ENCODE measurements at regions of chr10 and their contacts with region 1.

Region 1: GRCh38 chr10:51960494-51960895 is 261.1 kb upstream of the CSTF2T start:
- DNase-seq: no peak
- ATAC-seq: no peak
- H3K4me3 Mint-ChIP-seq: no peak overlapping the region
- H3K27ac Mint-ChIP-seq: no peak overlapping the region
- H3K4me1 Mint-ChIP-seq: no peaks in the 10 kb centered on the region
- H3K27me3 Mint-ChIP-seq: peaks cover 17% of the 10 kb centered on the region

Region 2: GRCh38 chr10:51010977-51011376 is 949.5 kb before region 1 on chr10:
- CTCF ChIA-PET with region 1: interaction called, 4 read pairs
- POLR2A ChIA-PET with region 1: no interaction called
- intact Hi-C with region 1: loop called (anchors 2 to 10 kb)
- DNase-seq: peak; percentile 21
- ATAC-seq: peak; percentile 42
- H3K4me3 Mint-ChIP-seq: no peak overlapping the region
- H3K27ac Mint-ChIP-seq: no peak overlapping the region
- H3K4me1 Mint-ChIP-seq: no peaks in the 10 kb centered on the region
- H3K27me3 Mint-ChIP-seq: peaks cover 15% of the 10 kb centered on the region

Region 3: GRCh38 chr10:51063659-51064535 is 896.6 kb before region 1 on chr10:
- CTCF ChIA-PET with region 1: no interaction called
- POLR2A ChIA-PET with region 1: no interaction called
- intact Hi-C with region 1: loop called in 1 of 2 experiments (anchors 5 kb)
- DNase-seq: no peak
- ATAC-seq: no peak
- H3K4me3 Mint-ChIP-seq: no peak overlapping the region
- H3K27ac Mint-ChIP-seq: no peak overlapping the region
- H3K4me1 Mint-ChIP-seq: no peaks in the 10 kb centered on the region
- H3K27me3 Mint-ChIP-seq: peaks cover 7% of the 10 kb centered on the region

Region 4: DNA sequence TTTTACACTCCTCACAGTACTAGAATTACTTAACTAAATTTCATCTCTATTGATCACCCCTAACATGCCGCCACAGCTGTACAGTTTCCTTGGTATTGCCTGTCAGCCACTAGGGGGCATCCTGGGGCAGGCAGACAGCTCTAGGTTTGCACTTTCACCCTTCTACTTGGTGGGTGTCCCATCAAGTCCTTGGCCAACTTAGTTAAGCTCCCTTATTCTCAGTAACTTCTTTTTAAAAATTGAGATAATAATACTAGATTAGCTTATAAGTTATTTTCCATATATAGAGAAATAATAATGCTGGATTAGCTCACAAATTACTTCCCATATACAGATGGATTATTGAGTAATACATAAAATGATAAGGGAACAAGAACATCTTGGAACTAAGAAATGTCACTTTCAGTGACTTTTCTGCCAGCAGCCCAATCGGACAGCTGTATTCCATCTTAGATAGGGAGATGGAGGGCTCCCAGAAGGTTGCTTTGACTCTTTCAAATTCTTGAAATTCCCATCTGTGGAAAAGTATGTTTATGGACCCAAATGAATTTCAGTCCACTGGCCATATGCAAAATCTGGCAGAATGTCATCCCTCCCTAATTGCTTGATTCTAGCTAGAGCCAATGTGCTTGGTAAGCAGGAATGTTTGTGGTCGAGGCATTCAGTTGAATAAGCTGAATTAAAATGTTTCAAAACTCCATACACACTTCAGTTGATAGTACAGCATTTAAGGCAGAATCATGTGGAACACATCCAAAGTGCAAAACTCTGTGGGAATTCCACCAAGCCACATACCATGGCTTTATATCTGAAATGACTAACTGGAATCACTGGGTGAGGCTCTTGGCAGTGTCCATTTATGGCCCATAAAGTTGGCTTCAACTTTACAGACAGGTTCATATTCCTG is 570.8 kb before region 1 on chr10:
- CTCF ChIA-PET with region 1: interaction called, 24 read pairs
- POLR2A ChIA-PET with region 1: no interaction called
- intact Hi-C with region 1: loop called (anchors 1 to 2 kb)
- DNase-seq: peak; percentile 73
- ATAC-seq: peak; percentile 74
- H3K4me3 Mint-ChIP-seq: no peak overlapping the region
- H3K27ac Mint-ChIP-seq: no peak overlapping the region
- H3K4me1 Mint-ChIP-seq: no peaks in the 10 kb centered on the region
- H3K27me3 Mint-ChIP-seq: no peaks in the 10 kb centered on the region

Region 5: GRCh38 chr10:52215745-52216361 is 255.4 kb after region 1 on chr10:
- CTCF ChIA-PET with region 1: interaction called, 4 read pairs
- POLR2A ChIA-PET with region 1: no interaction called
- intact Hi-C with region 1: loop called in 1 of 2 experiments (anchors 5 kb)
- DNase-seq: peak; percentile 52
- ATAC-seq: peak; percentile 74
- H3K4me3 Mint-ChIP-seq: no peak overlapping the region
- H3K27ac Mint-ChIP-seq: no peak overlapping the region
- H3K4me1 Mint-ChIP-seq: no peaks in the 10 kb centered on the region
- H3K27me3 Mint-ChIP-seq: no peaks in the 10 kb centered on the region

Measured in activated CD4-positive, alpha-beta T cell treated with anti-CD3 and anti-CD28 coated beads for 36 hours (primary cell).